ENCODE measurements at regions of chr6 and their contacts with region 1.

Region 1: DNA sequence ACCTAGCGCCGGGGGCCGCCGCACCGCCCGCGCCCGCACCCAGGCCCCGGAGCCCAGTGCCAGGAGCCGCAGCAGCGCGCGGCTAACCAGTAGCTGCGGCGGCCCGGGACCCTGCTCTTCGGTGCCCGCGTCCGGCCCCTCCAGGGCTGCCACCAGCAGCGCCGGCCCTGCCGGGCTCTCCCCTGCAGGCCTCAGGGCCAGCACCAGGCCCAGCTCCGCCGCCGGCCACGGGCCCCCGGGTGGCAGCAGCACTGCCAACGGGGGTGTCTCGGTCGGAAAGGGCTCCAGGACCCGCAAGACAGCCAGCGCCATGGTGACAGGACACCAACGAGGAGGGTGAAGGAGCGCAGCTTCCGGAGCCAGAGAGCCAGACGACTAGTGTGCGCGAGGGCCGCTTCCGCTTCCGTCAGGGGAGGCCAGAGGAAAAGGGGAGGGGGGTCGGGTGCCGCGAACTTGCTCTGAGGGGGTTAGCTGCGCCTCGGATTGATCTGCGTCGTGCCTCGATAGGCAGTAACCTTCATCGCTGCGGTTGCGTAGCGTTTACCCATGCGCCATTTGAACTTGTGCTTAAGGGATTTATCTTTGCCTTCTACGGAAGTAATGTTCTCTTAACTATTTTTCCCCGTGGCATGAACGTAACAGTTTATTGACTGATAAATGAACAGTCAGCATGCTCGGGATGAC is at the start of gene PEX6:
- DNase-seq: peak; percentile 90
- ATAC-seq: peak; percentile 91
- H3K4me3 ChIP-seq: peak within 1 kb of the TSS; percentile 79 to 96 (median 95)
- H3K27ac ChIP-seq: peak within 1 kb of the TSS; percentile 73
- H3K4me1 ChIP-seq: peaks cover 44% of the 10 kb centered on the region
- H3K27me3 ChIP-seq: no peaks in the 10 kb centered on the region; a peak in 1 of 5 replicates
- CTCF ChIP-seq: peak; percentile 33; the same call in 1 of the 2 replicates
- EP300 ChIP-seq: no peak; a peak in 1 of 4 replicates
- POLR2A ChIP-seq: peak; percentile 96
- RAD21 ChIP-seq: 0 out of 2 replicates have a peak, but pooled peaks have one; percentile 17
- total RNA-seq, gene PEX6: 3.6 and 5.1 TPM in 2 replicates

Region 2: GRCh38 chr6:42911171-42912021 is 67.6 kb before region 1 on chr6:
- CTCF ChIA-PET with region 1: no interaction called
- POLR2A ChIA-PET with region 1: interaction called, 15 read pairs
- in situ Hi-C with region 1: no loop called
- intact Hi-C with region 1: no loop called
- DNase-seq: no peak
- ATAC-seq: peak; percentile 85
- H3K4me3 ChIP-seq: peak overlapping the region; percentile 60 to 72 (median 61)
- H3K27ac ChIP-seq: peak overlapping the region; percentile 62
- H3K4me1 ChIP-seq: peaks cover 28% of the 10 kb centered on the region
- H3K27me3 ChIP-seq: peaks cover 2 to 4% of the 10 kb centered on the region in 2 experiments; a peak in 2 of 5 replicates
- CTCF ChIP-seq: peak; percentile 45; the same call in 1 of the 2 replicates
- EP300 ChIP-seq: no peak
- POLR2A ChIP-seq: 0 out of 4 replicates have a peak, but pooled peaks of 1 of the 2 experiments have one; percentile 37
- RAD21 ChIP-seq: no peak

Region 3: GRCh38 chr6:42938987-42939809 is 39.8 kb before region 1 on chr6:
- CTCF ChIA-PET with region 1: no interaction called
- POLR2A ChIA-PET with region 1: interaction called, 17 read pairs
- in situ Hi-C with region 1: no loop called
- intact Hi-C with region 1: no loop called
- DNase-seq: peak; percentile 86
- ATAC-seq: peak; percentile 87
- H3K4me3 ChIP-seq: peak overlapping the region in 1 of 3 experiments; percentile 20; a peak in 1 of 6 replicates
- H3K27ac ChIP-seq: peak overlapping the region; percentile 81
- H3K4me1 ChIP-seq: peaks cover 64% of the 10 kb centered on the region
- H3K27me3 ChIP-seq: no peaks in the 10 kb centered on the region
- CTCF ChIP-seq: peak; percentile 30; the same call in 1 of the 2 replicates
- EP300 ChIP-seq: peak; percentile 28 to 89; a peak in 3 of 4 replicates
- POLR2A ChIP-seq: no peak; a peak in 1 of 4 replicates
- RAD21 ChIP-seq: peak; percentile 44; the same call in 1 of the 2 replicates

Region 4: DNA sequence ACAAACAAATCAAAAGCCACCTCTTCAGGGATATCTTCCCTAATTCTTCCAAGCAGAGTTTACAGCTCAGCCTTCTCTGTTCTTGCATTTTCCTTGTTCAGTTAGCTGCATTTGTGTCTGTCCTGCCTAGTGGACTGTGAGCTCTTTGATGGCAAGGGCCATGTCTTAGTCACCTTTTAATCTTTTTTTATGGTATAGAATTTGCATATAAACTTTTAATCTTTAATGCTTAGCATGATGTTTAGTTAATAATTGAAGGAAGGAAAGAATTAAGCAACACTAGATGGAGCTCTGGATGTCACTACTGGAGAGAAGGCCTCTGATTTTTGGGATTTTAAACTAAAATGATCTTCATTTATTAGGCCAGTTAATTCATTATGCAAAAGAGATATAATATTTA is 17.5 kb after region 1 on chr6:
- CTCF ChIA-PET with region 1: no interaction called
- POLR2A ChIA-PET with region 1: interaction called, 23 read pairs
- in situ Hi-C with region 1: no loop called
- intact Hi-C with region 1: no loop called
- DNase-seq: no peak
- ATAC-seq: no peak; the same call in 1 of the 3 replicates
- H3K4me3 ChIP-seq: no peak overlapping the region
- H3K27ac ChIP-seq: no peak overlapping the region
- H3K4me1 ChIP-seq: no peaks in the 10 kb centered on the region
- H3K27me3 ChIP-seq: no peaks in the 10 kb centered on the region
- CTCF ChIP-seq: no peak
- EP300 ChIP-seq: no peak
- POLR2A ChIP-seq: no peak
- RAD21 ChIP-seq: no peak

Region 5: DNA sequence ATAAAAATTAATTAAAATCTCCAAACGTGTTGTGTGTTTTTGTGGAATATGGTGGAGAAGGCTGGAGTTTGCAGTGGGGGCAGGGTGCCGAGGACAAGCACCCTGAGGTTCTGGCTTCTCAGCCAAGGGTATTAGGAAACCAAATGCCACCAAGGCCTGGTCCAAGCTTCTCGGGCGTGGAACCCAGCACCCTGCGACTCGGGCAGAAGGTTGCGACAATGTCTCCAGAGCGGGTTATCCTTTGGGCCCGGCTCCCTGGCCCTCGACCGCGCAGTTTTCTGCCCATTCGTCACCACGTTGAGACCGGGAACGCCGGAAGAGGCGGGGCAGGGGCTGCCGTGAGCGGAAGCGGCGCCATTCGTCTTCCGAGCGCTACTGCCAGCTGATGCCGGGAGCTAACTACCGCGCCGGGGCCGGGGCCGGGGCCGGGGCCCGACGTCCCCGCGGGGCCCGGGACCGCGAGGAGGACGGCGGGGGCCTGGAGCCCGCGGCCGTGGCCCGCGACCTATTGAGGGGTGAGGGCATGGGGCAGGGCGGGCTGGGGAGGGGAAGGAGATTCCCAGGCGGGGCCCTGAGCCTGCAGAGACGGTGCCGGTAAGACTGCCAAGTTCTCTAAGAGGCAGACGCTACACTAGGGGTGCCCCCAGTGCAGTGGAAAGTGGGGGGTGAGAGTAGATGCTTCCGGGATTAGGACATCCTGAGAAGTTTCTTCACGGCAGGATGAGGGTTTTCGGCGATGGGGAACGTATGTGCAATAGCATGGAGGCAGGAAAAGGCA is 42.5 kb after region 1 on chr6 and contains the start of gene RRP36:
- CTCF ChIA-PET with region 1: no interaction called
- POLR2A ChIA-PET with region 1: interaction called, 33 read pairs
- in situ Hi-C with region 1: no loop called
- intact Hi-C with region 1: no loop called
- DNase-seq: peak; percentile 74
- ATAC-seq: peak; percentile 96
- H3K4me3 ChIP-seq: peak within 1 kb of the TSS; percentile 100
- H3K27ac ChIP-seq: peak within 1 kb of the TSS; percentile 77
- H3K4me1 ChIP-seq: peaks cover 30% of the 10 kb centered on the region
- H3K27me3 ChIP-seq: peaks cover 0 to 3% of the 10 kb centered on the region in 2 experiments; a peak in 1 of 5 replicates
- CTCF ChIP-seq: 0 out of 2 replicates have a peak, but pooled peaks have one; percentile 10
- EP300 ChIP-seq: no peak
- POLR2A ChIP-seq: peak; percentile 83 to 87
- RAD21 ChIP-seq: peak; percentile 48; the same call in 1 of the 2 replicates
- total RNA-seq, gene RRP36: 144 and 184 TPM in 2 replicates

Region 6: GRCh38 chr6:43369174-43370022 is 390.4 kb after region 1 on chr6 and contains the start of gene ZNF318:
- CTCF ChIA-PET with region 1: no interaction called
- POLR2A ChIA-PET with region 1: no interaction called
- in situ Hi-C with region 1: no loop called
- intact Hi-C with region 1: no loop called
- DNase-seq: peak; percentile 93
- ATAC-seq: peak; percentile 89
- H3K4me3 ChIP-seq: peak within 1 kb of the TSS; percentile 60 to 81 (median 66)
- H3K27ac ChIP-seq: peak within 1 kb of the TSS; percentile 65
- H3K4me1 ChIP-seq: peaks cover 38% of the 10 kb centered on the region
- H3K27me3 ChIP-seq: no peaks in the 10 kb centered on the region
- CTCF ChIP-seq: 0 out of 2 replicates have a peak, but pooled peaks have one; percentile 6
- EP300 ChIP-seq: no peak
- POLR2A ChIP-seq: peak in 1 of 2 experiments; percentile 59; a peak in 3 of 4 replicates
- RAD21 ChIP-seq: peak; percentile 53; the same call in 1 of the 2 replicates
- total RNA-seq, gene ZNF318: 13.0 and 19.4 TPM in 2 replicates